ENCODE measurements at regions of chr20 and their contacts with region 1.

Region 1: DNA sequence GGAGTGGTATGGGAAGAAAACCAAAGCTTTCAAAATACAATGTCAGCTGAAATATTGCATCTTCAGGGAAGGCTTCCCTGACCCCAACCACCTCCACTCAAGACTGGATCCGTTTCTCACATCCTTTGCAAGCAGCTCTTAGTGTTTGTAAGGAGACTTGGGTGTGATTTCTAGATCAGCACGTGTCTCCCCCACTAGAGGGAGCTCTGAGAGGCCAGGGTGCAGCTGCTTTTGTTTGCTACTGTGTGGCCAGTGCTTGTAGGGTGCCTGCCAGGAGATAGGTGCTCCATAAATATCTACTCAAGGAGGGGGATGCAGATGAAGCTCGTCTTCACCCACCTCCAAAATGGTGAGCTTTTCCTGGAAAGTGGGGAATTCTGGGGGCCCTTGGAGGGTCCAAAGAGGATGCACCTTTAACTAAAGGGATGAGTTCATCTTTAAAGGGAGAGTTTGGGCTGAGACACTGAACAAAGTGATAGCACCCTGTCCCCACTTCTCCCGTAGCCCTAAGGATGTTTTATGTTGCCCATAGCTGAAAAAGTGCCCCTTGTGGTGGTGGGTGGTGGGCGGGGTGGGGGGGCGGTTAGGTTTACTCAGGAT is 52.6 kb upstream of the MAFB start:
- DNase-seq: no peak
- H3K4me3 ChIP-seq: no peak overlapping the region
- H3K27ac ChIP-seq: no peak overlapping the region
- H3K27me3 ChIP-seq: peaks cover 16% of the 10 kb centered on the region
- CTCF ChIP-seq: peak; percentile 75

Region 2: DNA sequence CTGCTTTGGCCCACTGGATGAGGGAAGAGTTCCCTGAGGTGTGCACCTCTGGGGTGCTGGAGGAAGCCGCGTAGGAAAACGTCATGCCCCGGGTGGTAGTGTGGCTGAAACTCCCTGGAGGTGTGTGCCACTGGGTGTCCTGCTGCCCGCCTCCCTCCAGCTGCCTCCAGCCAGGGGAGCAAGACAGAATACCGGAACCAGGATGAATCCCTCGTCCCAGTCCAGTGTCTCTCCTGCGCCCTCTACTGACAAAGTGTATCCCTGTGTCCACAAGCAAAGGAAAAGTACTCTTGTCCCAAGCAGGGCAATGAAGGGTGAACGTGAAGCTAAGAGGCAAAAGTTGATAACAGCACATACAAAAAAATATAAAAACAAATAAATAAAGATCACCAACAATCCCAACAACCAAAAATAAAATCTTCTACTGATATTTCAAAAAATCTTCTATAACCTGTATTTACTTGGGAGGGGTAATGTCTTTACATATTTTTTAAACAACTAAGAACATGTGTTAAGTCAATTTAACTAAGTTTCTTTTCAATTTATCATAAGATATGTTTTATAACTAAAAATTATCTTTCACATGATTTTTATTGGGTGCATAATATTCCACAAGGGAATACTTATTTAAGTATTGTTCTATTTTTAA is 490.2 kb before region 1 on chr20:
- CTCF ChIA-PET with region 1: no interaction called
- POLR2A ChIA-PET with region 1: no interaction called
- DNase-seq: no peak
- H3K4me3 ChIP-seq: no peak overlapping the region
- H3K27ac ChIP-seq: no peak overlapping the region
- H3K27me3 ChIP-seq: no peaks in the 10 kb centered on the region
- CTCF ChIP-seq: peak; percentile 58

Region 3: DNA sequence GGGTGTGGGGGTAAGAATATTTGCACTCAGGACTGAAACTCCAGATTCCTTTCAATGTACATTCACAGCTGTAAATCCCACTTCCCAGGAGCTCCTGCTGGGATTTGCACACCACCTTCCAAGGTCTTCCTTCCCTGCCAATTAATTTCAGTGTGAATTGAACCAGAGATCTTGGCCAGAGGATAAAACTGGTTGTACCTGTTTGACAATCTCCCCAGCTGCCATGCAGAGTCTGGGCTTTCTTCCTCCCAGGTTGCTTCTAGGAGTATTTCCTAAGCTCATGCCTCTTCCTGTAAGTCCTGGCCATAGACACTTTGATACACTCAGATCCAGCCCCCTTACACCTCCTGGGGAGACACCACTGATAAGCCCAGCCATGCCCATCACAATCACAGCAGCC is 68.2 kb before region 1 on chr20:
- CTCF ChIA-PET with region 1: no interaction called
- POLR2A ChIA-PET with region 1: no interaction called
- DNase-seq: no peak
- H3K4me3 ChIP-seq: no peak overlapping the region
- H3K27ac ChIP-seq: no peak overlapping the region
- H3K27me3 ChIP-seq: peaks cover 6% of the 10 kb centered on the region
- CTCF ChIP-seq: no peak

Region 4: DNA sequence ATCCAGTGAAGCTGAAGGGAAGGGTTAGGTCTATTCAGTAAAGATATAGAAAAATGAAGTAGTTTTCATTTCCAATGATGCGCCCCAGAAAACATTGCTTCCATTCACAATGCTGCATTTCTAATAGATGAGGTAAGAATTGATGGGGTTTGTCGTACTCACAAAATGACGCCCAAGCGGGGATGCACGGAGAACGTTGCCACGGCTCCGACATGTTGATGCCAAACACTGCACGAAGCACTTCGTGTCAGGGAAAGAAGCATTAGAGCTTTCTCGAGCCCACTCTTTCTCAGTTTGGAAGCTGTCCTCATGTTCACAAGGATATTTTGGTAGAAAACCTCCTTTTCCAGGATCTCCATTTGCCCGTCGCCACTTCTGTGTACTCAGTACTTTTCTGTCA is 31.0 kb before region 1 on chr20:
- CTCF ChIA-PET with region 1: interaction called, 10 read pairs
- POLR2A ChIA-PET with region 1: no interaction called
- DNase-seq: no peak
- H3K4me3 ChIP-seq: no peak overlapping the region
- H3K27ac ChIP-seq: no peak overlapping the region
- H3K27me3 ChIP-seq: no peaks in the 10 kb centered on the region
- CTCF ChIP-seq: no peak

Region 5: GRCh38 chr20:40720826-40721225 is 20.8 kb before region 1 on chr20:
- CTCF ChIA-PET with region 1: interaction called, 10 read pairs
- POLR2A ChIA-PET with region 1: no interaction called
- DNase-seq: no peak
- H3K4me3 ChIP-seq: no peak overlapping the region
- H3K27ac ChIP-seq: no peak overlapping the region
- H3K27me3 ChIP-seq: peaks cover 2% of the 10 kb centered on the region
- CTCF ChIP-seq: no peak

Region 6: GRCh38 chr20:40754339-40754943 is 12.8 kb after region 1 on chr20:
- CTCF ChIA-PET with region 1: interaction called, 17 read pairs
- POLR2A ChIA-PET with region 1: no interaction called
- DNase-seq: no peak
- H3K4me3 ChIP-seq: no peak overlapping the region
- H3K27ac ChIP-seq: no peak overlapping the region
- H3K27me3 ChIP-seq: no peaks in the 10 kb centered on the region
- CTCF ChIP-seq: no peak

Region 7: DNA sequence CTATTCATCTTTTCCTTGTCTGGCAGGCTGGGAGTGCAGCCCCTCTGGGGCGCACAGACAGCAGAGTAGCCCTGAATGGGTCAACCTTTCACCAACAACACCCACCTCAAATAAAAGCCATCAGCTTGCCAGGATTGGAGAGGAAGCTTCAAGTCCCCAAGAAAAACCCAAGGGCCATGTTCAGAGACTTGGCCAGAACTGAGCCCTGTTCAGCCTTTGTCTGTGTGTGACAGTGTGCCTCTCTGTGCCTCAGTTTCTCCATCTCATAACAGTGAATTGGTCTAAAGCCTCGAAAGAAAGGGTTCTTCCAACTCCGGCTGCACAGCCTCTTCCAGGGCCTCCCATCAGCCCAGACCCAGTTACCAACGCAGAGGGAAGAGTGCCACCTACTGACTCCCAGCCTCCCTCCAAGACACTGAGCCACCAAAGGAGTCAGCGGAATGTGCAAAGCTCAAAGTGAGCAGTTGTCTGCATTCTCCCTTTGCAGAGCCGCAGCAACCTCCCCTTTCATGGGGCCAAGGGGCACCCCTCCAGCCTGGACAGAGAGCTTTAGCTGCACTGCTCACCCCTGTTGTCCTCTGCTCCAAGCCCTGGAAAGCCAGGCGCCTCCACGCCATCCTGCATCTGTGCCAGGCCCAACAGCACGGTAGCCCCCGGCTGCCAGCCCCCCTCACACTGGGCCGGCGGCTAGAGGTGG is 204.3 kb after region 1 on chr20:
- CTCF ChIA-PET with region 1: interaction called, 30 read pairs
- POLR2A ChIA-PET with region 1: no interaction called
- DNase-seq: no peak
- H3K4me3 ChIP-seq: no peak overlapping the region
- H3K27ac ChIP-seq: no peak overlapping the region
- H3K27me3 ChIP-seq: no peaks in the 10 kb centered on the region
- CTCF ChIP-seq: peak; percentile 67

Region 8: DNA sequence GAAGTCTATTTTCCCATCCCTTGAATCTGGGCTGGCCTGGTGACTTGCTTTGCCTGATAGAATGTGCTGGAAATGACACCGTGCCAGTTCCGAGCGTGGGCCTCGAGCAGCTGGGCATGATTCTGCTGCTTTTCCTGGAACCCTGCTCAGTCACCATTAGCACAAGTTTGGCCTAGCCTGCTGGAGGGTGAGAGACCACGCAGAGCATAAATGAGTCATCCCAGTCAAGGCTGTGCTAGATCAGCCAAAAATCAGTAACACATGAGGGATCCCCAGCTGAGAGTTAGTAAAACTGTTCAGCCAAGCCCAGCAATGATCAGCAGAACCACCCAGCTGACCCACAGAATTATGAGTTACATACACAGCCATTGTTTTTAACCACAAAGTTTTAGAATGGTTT is 212.2 kb after region 1 on chr20:
- CTCF ChIA-PET with region 1: interaction called, 10 read pairs
- POLR2A ChIA-PET with region 1: no interaction called
- DNase-seq: no peak
- H3K4me3 ChIP-seq: no peak overlapping the region
- H3K27ac ChIP-seq: peak overlapping the region; percentile 21
- H3K27me3 ChIP-seq: peaks cover 4% of the 10 kb centered on the region
- CTCF ChIP-seq: no peak

Region 9: DNA sequence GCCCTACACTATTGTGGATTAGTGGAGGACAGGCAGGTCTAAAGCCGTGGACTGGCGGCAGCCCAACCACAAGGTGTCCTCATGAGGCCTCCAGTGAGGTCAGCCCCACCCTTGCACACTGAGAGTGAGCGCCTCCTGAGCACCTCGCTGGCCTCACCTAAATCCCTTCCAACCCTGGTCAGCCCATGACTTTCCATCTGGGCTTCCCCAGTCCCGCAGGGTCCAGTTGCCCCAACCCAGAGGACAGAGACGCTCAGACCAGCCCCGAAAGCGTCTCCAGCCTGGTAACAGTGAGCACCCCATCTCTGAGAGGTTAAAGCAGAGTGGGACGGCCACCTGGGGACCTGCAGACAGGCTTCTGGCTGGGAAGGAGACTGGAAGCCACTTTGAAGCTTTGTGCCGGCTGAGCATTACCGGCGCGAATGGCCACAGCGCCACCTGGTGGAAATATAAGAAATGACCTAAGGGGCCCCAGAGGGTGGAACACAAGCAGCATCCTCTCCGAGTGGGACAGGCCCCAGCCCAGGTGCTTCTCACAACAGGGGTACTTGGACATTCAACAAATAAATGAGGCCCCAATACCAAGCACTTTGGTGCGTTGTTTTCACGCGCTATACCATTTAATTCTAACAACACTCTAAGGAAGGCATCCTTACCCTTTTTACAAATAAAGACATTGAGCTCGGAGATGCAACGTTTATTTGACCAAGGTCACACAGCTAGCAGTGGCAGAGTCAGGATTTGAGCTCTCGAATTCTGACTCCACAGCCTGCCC is 221.3 kb after region 1 on chr20:
- CTCF ChIA-PET with region 1: interaction called, 62 read pairs
- POLR2A ChIA-PET with region 1: no interaction called
- DNase-seq: no peak
- H3K4me3 ChIP-seq: no peak overlapping the region
- H3K27ac ChIP-seq: no peak overlapping the region
- H3K27me3 ChIP-seq: no peaks in the 10 kb centered on the region
- CTCF ChIP-seq: peak; percentile 85

Measured in AG04450 (cell line).